Head of caudate nucleus (tissue), 42 donors: ENCODE measurements at regions of chr12 and their contacts with region 1.

Region 1: DNA sequence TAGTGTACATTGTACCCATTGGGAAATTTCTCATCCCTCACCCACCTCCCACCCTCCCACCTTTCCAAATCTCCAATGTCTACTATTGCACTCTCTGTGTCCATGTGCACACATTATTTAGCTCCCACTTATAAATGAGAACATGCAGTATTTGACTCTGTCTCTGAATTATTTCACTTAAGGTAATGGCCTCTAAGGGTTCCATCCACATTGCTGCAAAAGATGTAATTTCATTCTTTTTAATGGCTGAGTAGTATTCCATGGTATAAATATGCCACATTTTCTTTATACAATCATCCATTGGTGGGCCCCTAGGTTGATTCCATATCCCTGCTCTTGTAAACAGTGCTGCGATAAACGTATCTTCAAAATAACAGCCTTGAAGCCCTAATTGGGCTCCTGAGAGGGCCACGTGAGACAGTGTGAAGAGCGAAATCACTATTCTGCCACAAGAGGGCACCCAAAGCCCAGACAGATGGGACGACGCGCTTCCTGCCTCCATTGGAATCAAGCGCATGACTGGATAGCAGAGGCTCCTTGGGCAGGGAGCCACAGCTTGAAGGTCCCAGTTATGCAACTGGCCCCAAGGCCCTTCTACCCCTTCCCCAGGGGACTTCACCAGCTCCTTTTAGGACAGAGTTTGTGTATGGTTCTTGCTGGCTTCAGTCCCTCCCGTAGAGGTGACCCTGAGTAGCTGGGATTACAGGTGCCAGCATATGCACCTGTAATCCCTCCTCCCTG is 21.3 kb upstream of the CD27 start:
- DNase-seq: peak; percentile 56 to 92 (median 83)

Region 2: DNA sequence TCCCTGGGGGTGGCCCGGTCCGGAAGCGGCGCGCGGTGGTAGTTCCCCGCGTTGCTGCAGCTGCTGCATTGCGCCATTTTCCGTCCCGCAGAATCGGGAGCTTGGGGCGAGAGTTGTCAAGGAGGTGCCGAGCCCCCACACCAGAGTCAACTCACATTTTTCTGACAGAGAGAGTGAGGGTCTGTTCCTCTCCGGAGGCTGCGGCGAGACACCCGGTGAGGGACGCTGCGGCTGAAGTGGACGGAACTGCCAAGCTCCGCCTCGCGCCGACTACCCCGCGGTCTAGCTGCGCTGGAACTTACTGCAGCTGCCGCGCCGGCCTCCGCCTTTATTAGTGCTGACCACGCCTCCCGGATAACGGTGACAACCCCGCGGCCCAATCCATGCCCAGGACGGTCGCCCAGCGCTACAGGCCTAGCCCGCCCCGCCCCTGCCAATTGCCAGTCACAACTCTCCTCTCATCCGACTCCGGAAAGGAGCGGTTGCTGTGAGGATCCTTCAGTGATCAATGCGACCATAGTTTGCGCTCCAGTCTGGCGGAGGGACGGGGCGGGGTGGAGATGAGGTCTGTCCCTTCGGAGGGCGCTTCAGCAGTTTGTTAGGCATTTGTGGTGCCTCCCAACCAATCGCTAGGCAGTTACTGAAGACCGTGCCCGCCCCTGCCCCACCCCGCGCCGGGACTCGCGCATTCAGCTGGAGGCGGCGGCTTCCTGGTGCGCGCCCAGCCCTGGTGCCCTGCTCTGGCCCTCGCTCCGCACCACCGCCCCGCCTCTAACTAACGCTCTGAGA is 47.1 kb after region 1 on chr12 and contains the start of gene VAMP1:
- intact Hi-C with region 1: loop called (anchors 5 kb)
- DNase-seq: peak; percentile 99 to 100 (median 100)